Uterus (tissue), 4 donors: ENCODE measurements at regions of chr18 and their contacts with region 1.

Region 1: DNA sequence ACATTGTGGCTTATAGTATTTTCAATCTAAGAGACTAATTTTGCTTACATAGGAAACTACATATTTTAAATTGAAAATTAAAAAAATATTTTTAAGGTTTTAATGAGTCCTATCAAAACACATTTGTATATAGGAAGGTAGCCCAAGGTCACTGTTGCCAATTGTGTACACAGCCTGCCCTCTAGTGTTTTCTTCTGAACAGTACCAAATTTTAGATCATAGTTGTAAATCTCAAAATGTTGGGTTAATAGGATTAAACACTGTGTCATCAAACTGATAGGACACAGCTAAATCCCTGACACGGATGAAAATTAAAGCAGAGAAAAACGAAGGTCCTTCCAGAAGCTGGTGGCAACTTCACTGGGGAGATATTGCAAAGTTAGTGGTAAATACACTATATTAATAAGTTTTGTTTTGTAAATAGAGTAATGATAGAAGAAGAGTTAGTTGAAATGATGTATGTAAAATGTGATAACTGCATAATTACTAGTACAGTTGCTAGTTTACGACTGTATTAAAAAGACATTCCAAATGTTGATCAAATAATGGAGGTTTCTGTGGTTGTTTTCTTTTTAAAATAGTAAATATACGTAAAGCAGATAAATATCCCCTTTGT is 19.7 kb downstream of the CLUL1 start:
- DNase-seq: no peak
- H3K4me3 ChIP-seq: no peak overlapping the region
- H3K27ac ChIP-seq: no peak overlapping the region
- H3K4me1 ChIP-seq: no peaks in the 10 kb centered on the region
- H3K27me3 ChIP-seq: no peaks in the 10 kb centered on the region
- CTCF ChIP-seq: peak; percentile 65 to 84 (median 68)
- POLR2A ChIP-seq: no peak

Region 2: GRCh38 chr18:286515-287310 is 329.8 kb before region 1 on chr18:
- intact Hi-C with region 1: loop called (anchors 5 kb)
- DNase-seq: no peak
- H3K4me3 ChIP-seq: no peak overlapping the region
- H3K27ac ChIP-seq: no peak overlapping the region
- H3K4me1 ChIP-seq: no peaks in the 10 kb centered on the region
- H3K27me3 ChIP-seq: no peaks in the 10 kb centered on the region
- CTCF ChIP-seq: peak; percentile 48 to 64 (median 51)
- POLR2A ChIP-seq: no peak

Region 3: GRCh38 chr18:887716-888115 is 271.2 kb after region 1 on chr18:
- intact Hi-C with region 1: no loop called
- DNase-seq: no peak
- H3K4me3 ChIP-seq: no peak overlapping the region
- H3K27ac ChIP-seq: no peak overlapping the region
- H3K4me1 ChIP-seq: no peaks in the 10 kb centered on the region
- H3K27me3 ChIP-seq: no peaks in the 10 kb centered on the region
- CTCF ChIP-seq: no peak
- POLR2A ChIP-seq: no peak